ENCODE measurements at regions of chr4 and their contacts with region 1.

Region 1: DNA sequence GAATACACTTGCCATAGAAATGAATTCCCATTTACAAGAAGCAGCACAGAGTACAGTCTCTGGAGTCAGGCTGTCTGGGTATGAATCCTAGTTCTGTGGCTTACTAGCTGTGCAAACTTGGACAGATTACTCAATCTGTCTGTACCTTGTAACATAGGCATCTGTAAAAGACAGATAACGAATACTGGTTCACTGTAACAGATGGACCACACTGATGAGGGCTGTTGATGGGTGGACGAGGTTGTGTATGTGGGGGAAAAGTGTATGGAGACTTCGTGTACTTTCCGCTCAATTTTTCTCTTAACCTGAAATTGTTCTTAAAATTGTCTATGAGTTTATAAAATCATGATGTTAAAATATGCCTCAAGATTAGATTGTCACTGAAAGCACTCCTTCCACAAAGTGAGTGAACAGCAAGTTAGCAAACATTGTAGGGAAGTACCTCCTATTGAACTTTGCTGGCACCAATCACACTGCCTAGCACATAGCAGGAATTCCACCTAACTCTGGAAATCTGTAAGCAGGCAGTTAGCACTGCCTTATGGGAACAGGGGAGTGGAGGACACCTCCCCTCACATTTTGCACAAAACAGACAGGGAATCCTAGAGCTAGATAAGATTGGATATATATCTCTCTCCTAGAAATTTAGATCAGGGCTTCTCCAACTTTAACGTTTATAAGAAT is 6.5 kb upstream of the EXOSC9 start:
- DNase-seq: no peak
- H3K4me3 Mint-ChIP-seq: no peak overlapping the region
- H3K27ac Mint-ChIP-seq: no peak overlapping the region
- H3K4me1 Mint-ChIP-seq: peaks cover 40% of the 10 kb centered on the region
- H3K27me3 Mint-ChIP-seq: no peaks in the 10 kb centered on the region

Region 2: GRCh38 chr4:121139533-121140222 is 655.0 kb before region 1 on chr4:
- intact Hi-C with region 1: loop called (anchors 5 kb)
- DNase-seq: no peak
- H3K4me3 Mint-ChIP-seq: peak overlapping the region; percentile 31
- H3K27ac Mint-ChIP-seq: peak overlapping the region; percentile 69
- H3K4me1 Mint-ChIP-seq: peaks cover 41% of the 10 kb centered on the region
- H3K27me3 Mint-ChIP-seq: no peaks in the 10 kb centered on the region

Region 3: DNA sequence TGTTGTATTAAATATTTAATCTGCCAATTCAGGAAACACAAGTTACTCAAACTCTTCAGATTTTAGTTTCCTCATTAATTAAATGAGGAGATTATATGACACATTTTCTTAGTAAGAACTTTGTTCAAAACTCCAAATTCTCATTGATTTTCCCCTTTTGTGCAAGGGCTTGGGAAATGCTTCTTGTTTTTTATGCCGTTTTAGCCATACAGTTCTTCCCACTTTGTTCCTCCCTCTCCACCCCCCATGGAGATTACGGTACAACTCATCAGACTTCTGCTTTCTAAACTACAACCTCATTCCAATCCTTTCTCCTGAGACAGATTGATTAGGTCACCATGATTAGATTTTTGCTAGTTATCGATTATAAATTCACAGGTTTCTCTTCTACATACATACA is 86.5 kb after region 1 on chr4:
- intact Hi-C with region 1: no loop called
- DNase-seq: no peak
- H3K4me3 Mint-ChIP-seq: no peak overlapping the region
- H3K27ac Mint-ChIP-seq: no peak overlapping the region
- H3K4me1 Mint-ChIP-seq: peaks cover 5% of the 10 kb centered on the region
- H3K27me3 Mint-ChIP-seq: peaks cover 36% of the 10 kb centered on the region

Measured in activated T-helper 1 cell treated with anti-CD3 and anti-CD28 coated beads, Interleukin-12 subunit alpha, Interleukin-12 subunit beta, Interleukin-2, Interleukin-4 antibody, amounts not matched to agents 30 ng/mL and 10 ng/mL and 1 ng/mL, durations not matched to agents 14 hours and 24 hours and 36 hours (primary cell).